ENCODE measurements at regions of chr10 and their contacts with region 1.

Region 1: GRCh38 chr10:119103903-119104652 is at the start of gene DENND10:
- DNase-seq: peak; percentile 80
- ATAC-seq: peak; percentile 88
- H3K4me3 Mint-ChIP-seq: peak within 1 kb of the TSS; percentile 81
- H3K27ac Mint-ChIP-seq: peak within 1 kb of the TSS; percentile 55
- H3K4me1 Mint-ChIP-seq: peaks cover 9% of the 10 kb centered on the region
- H3K27me3 Mint-ChIP-seq: peaks cover 9% of the 10 kb centered on the region
- total RNA-seq, gene DENND10: 38.8 to 43.1 TPM

Region 2: DNA sequence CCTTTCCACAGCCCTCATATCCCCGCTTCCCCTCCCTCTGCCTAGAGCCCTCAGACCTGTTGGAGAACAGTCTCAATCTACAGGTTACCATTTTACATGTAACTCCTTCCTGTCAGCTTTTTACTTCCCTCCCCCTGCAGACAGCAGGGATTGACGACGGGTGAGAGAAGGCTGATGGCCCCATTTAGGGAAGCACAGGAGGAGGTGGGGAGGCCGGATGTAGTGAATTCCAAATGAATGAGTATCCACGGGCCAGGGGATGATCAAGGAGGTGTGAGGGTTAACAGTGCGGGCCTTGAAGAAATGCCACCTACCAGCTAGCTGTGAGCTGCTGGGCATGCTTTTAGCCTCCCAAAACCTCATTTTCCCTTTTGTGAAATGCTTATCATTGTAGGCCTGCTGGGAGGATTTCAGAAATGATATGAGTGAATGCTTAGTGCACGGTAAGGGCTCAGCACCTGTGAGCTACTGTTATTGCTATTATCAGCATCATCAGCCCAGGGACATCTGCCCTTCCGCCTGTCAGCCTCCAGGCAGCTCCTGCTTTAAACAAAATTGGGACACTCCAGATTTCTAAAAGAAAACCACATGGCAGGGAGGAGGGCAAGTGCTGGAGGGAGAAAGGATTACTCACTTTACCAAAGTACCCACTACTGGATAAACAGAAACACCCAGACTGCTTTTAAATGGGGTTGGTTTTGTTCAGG is 81.1 kb before region 1 on chr10:
- POLR2A ChIA-PET with region 1: no interaction called
- DNase-seq: no peak
- ATAC-seq: no peak
- H3K4me3 Mint-ChIP-seq: no peak overlapping the region
- H3K27ac Mint-ChIP-seq: no peak overlapping the region
- H3K4me1 Mint-ChIP-seq: no peaks in the 10 kb centered on the region
- H3K27me3 Mint-ChIP-seq: peaks cover 8% of the 10 kb centered on the region

Region 3: GRCh38 chr10:119080521-119081260 is 23.4 kb before region 1 on chr10 and contains the start of gene EIF3A:
- POLR2A ChIA-PET with region 1: interaction called, 16 read pairs
- DNase-seq: peak; percentile 98
- ATAC-seq: peak; percentile 78
- H3K4me3 Mint-ChIP-seq: peak within 1 kb of the TSS; percentile 95
- H3K27ac Mint-ChIP-seq: peak within 1 kb of the TSS; percentile 99
- H3K4me1 Mint-ChIP-seq: peaks cover 33% of the 10 kb centered on the region
- H3K27me3 Mint-ChIP-seq: no peaks in the 10 kb centered on the region
- total RNA-seq, gene EIF3A: 105 to 111 TPM

Region 4: GRCh38 chr10:119131512-119132240 is 27.6 kb after region 1 on chr10:
- POLR2A ChIA-PET with region 1: interaction called, 42 read pairs
- DNase-seq: no peak
- ATAC-seq: peak; percentile 98
- H3K4me3 Mint-ChIP-seq: peak overlapping the region; percentile 81
- H3K27ac Mint-ChIP-seq: peak overlapping the region; percentile 92
- H3K4me1 Mint-ChIP-seq: peaks cover 53% of the 10 kb centered on the region
- H3K27me3 Mint-ChIP-seq: no peaks in the 10 kb centered on the region

Region 5: DNA sequence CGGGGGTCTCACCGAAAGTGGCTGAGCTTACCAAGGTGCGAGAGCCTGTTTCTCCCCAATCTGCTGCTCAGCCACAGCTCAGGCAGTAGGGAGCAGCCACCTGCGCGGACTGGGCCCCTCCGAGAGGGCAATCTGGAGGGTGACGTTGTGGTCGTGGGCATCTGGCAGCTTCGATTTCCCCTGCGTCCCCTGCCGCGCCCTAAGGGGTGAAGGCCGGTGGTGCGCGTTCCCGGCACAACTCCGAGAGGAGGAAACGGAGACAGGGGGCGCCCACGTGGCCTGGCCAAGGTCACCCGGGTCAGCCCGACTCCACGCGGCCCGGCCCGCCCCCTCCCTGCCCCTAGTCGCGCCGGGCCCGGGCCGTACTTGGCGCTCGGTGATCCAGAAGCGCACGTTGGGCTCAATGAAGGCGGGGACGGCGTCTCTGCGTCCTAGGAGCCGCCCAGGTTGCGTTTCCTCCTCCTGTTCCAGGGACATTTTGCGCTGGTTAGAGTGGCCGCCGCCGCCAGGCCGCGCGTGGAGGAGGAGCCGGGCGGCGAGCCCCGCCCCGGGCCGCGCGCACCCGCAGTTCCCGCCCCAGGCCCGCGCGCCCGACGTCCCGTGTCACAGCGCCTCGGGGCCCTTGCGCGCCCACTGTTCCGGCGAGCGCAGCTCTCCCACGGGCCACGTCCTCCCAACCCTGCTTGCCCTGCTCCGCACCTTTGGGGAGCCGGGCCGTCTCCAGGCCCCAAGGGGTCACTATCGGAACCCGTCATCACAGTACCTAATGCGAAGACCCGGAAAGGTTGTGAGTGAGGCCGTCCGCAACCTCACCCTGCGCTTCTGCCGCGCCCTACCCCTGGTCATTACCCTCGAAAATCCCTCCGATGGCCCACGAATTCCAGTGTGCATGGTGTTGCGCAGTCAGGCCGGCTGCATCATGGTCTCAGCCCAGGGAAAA is 61.4 kb after region 1 on chr10 and contains the start of gene SFXN4:
- POLR2A ChIA-PET with region 1: interaction called, 12 read pairs
- DNase-seq: peak; percentile 92
- ATAC-seq: peak; percentile 91
- H3K4me3 Mint-ChIP-seq: peak within 1 kb of the TSS; percentile 92
- H3K27ac Mint-ChIP-seq: peak within 1 kb of the TSS; percentile 96
- H3K4me1 Mint-ChIP-seq: peaks cover 29% of the 10 kb centered on the region
- H3K27me3 Mint-ChIP-seq: no peaks in the 10 kb centered on the region
- total RNA-seq, gene SFXN4: 23.2 to 24.1 TPM

Measured in activated naive CD8-positive, alpha-beta T cell treated with anti-CD3 and anti-CD28 coated beads, Interleukin-2, amount 10 ng/mL, durations not matched to agents 7 days and 5 days (primary cell).